Posterior vena cava (tissue), 2 donors: ENCODE measurements at regions of chr3 and their contacts with region 1.

Region 1: DNA sequence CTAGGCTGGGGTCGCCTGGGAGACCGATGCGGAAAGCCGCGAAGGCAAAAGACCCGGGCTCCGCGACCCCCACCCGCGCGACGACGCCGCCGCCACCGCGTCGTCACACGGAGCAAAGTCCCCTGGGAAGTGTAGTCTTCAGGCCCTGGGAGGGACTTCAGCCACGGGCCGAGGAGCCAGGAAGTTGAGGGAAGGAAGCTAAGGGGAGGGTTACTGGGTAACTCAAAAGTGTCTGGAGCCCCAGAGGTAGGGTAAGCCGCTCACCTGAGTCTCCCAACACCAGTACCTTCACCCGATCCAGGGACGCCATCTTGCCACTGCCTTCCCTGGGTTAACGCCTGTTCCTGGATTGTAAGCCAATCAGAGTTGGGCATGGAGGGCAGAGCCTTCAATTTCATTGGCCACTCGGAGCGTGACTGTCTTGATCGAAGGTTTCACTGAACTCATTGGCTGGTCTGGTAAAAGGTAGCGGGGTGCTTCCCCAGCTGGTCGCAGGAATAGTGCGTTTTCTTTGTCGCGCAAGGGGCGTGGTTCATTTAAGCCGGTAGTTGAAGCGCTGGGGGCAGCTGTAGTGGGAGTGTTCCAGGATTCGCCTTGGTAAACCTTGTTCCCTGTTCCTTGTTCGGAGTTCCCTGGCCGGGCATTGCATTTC is at the starts of genes GTF2E1 and RABL3:
- DNase-seq: peak; percentile 99
- total RNA-seq, gene GTF2E1: 12.0 to 16.7 TPM
- total RNA-seq, gene RABL3: 16.9 to 22.3 TPM

Region 2: DNA sequence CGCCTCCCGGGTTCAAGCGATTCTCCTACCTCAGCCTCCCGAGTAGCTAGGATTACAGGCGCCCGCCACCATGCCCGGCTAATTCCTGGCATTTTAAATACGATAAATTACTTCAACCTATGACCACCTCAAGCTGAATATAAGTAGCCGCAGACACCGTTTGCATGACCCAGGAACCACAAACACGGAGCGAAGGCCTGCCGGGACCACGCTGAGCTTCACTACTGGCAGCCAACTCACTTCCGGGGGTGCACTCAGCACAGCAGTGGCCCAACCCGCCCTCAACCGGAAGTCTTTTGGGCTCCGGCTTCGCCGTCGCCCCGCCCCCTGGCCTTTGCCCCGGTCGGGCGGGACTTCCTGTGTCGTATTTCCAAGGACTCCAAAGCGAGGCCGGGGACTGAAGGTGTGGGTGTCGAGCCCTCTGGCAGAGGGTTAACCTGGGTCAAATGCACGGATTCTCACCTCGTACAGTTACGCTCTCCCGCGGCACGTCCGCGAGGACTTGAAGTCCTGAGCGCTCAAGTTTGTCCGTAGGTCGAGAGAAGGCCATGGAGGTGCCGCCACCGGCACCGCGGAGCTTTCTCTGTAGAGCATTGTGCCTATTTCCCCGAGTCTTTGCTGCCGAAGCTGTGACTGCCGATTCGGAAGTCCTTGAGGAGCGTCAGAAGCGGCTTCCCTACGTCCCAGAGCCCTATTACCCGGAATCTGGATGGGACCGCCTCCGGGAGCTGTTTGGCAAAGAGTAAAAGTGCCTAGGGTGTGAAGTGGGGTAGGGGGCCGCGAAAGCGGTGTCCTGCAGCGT is 1243.9 kb before region 1 on chr3 and contains the start of gene TIMMDC1:
- intact Hi-C with region 1: loop called in 1 of 2 experiments (anchors 5 kb)
- DNase-seq: peak; percentile 99
- total RNA-seq, gene TIMMDC1: 74.9 to 79.3 TPM

Region 3: DNA sequence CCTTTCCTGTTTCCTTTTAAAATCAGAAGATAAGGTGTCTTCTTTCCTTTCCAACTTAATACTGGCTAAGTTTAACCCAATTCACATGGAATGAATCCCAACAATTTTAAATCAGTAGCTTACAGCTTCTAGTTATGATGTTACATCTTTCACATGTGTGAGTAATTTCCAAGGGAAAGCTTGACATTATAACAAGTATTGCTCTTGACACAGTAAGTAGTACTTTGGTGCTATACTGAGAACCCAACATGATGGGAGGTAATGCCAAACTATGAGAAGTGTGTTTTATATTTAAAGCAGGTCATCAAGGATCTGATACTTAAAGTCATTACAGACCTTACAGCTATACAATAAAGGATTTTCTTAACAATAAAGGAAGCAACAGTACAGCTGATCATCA is 29.1 kb before region 1 on chr3:
- intact Hi-C with region 1: no loop called
- DNase-seq: no peak